ENCODE measurements at regions of chr17 and their contacts with region 1.

Region 1: GRCh38 chr17:79789534-79790353 is 7.1 kb downstream of the CBX8 start:
- DNase-seq: peak in 3 of 5 donors; percentile 45 to 82 (median 68)
- ATAC-seq: peak in 3 of 4 donors; percentile 42 to 65 (median 47)
- H3K4me3 ChIP-seq: peak overlapping the region in 5 of 12 donors; percentile 7 to 28 (median 10)
- H3K27ac ChIP-seq: no peak overlapping the region
- H3K4me1 ChIP-seq: peaks cover 0 to 53% (median 30%) of the 10 kb centered on the region in 12 donors
- H3K27me3 ChIP-seq: peaks cover 41 to 87% (median 62%) of the 10 kb centered on the region in 9 donors
- CTCF ChIP-seq: peak; percentile 66 to 88 (median 79)
- POLR2A ChIP-seq: no peak

Region 2: DNA sequence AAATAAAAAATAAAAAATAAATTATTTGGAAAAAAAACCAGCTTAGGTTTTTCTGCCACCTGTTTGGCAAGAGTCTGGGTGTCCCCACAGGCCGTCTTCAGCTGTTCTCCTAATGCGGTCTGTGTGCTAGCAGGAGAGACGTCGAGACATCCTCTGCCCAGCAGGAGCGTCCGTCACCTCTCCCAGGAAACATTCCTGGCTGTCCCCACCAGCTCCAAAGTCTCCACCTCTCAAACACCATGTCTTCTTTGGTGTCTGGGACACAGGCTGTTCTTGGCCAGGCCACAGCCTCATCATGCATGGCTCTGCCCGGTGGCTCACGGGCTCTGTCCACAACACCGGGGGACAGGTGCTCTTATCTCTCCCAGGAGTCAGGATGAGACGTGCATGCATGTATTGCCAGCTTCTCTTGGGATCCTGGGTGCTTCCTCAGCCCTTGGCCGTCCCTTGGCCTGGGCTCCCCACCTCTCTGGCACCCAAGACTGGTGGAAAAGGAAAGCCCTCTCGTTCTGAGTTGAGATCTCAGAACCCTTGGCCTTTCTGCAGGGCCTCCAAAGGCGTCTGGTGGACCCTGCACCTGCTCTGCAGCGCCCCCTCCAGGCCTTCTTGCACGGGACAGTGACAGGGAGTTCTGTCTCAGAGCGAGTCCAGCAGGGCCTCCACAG is 134.4 kb after region 1 on chr17:
- intact Hi-C with region 1: loop called in 5 of 10 experiments (anchors 5 to 10 kb)
- DNase-seq: no peak
- ATAC-seq: no peak
- H3K4me3 ChIP-seq: no peak overlapping the region
- H3K27ac ChIP-seq: no peak overlapping the region
- H3K4me1 ChIP-seq: peaks cover 0 to 18% (median 7%) of the 10 kb centered on the region in 12 donors
- H3K27me3 ChIP-seq: peaks cover 9 to 93% (median 28%) of the 10 kb centered on the region in 9 donors
- CTCF ChIP-seq: peak in 9 of 12 donors; percentile 10 to 45 (median 29)
- POLR2A ChIP-seq: no peak

Region 3: DNA sequence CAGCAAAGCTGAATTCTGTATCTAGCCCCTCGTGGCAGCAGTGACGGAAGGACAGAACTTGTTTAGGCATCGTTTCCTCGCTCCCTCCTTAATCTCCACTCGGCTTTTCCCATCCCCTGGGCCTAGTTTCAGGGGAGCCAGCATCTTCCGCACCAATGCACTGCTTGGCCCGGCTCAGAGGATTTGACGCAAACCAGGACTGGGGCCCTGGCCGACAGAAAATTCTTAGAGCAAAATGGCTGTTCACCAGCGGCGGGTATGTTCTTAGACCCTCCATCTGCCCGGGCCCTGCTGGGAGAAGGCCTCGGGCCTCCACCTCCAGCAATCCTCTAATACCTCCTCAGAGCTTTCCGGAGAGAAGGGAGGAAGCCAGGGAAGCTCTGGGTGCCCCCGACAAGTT is 191.3 kb after region 1 on chr17:
- intact Hi-C with region 1: loop called in 1 of 10 experiments (anchors 5 kb)
- DNase-seq: no peak
- ATAC-seq: no peak
- H3K4me3 ChIP-seq: no peak overlapping the region
- H3K27ac ChIP-seq: no peak overlapping the region
- H3K4me1 ChIP-seq: peaks cover 0 to 5% (median 0%) of the 10 kb centered on the region in 12 donors
- H3K27me3 ChIP-seq: no peaks in the 10 kb centered on the region
- CTCF ChIP-seq: no peak
- POLR2A ChIP-seq: no peak

Measured in heart left ventricle (tissue), 16 donors.